Panc1 (cell line): ENCODE measurements at regions of chr22 and their contacts with region 1.

Region 1: GRCh38 chr22:44952863-44953746 is 56.7 kb downstream of the PHF21B start:
- DNase-seq: no peak
- ATAC-seq: no peak
- H3K4me3 ChIP-seq: no peak overlapping the region
- H3K27ac ChIP-seq: no peak overlapping the region
- H3K4me1 ChIP-seq: no peaks in the 10 kb centered on the region
- H3K27me3 ChIP-seq: no peaks in the 10 kb centered on the region
- CTCF ChIP-seq: no peak

Region 2: DNA sequence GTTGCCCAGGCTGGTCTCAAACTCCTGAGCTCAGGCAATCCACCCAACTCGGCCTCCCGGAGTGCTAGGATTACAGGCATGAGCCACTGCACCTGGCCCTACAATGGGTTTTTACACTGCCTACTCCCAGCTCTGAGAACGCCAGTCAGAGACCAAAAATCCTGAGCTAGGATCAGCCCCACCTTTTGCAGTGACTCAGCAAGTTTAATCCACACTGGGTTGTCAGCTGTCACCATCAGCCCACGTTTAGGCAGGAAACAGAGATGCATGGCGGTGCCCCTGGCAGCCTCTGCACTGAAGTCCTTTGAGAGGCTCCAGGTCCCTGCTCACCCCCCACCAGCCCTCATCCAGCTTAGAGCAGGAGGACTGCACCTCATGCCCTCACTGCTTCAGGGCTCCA is 83.1 kb before region 1 on chr22:
- CTCF ChIA-PET with region 1: no interaction called
- POLR2A ChIA-PET with region 1: interaction called, 10 read pairs
- in situ Hi-C with region 1: no loop called
- intact Hi-C with region 1: no loop called
- DNase-seq: no peak
- ATAC-seq: no peak
- H3K4me3 ChIP-seq: no peak overlapping the region
- H3K27ac ChIP-seq: no peak overlapping the region
- H3K4me1 ChIP-seq: no peaks in the 10 kb centered on the region
- H3K27me3 ChIP-seq: no peaks in the 10 kb centered on the region
- CTCF ChIP-seq: no peak